Endothelial cell of umbilical vein (primary cell): ENCODE measurements at regions of chr6 and their contacts with region 1.

Region 1: DNA sequence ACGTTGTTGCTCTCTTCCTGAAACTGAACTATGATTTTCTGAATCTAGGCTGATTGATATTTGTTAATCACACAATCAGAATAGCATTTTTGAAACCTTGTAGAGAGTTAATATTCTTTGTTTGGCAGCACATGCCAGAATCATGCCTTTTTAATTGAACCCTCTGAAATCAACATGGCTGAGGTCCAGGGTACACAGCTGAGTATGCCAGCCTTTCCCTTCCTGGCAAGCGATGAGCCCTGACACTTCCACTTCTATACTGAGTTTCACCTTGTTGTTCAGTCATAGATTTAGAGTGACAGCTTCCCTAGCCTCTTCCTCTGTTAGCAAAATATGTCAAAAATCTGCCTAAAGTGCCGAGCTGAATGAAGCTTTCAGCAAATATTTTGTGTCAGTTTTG is 6.8 kb downstream of the HDDC2 start:
- DNase-seq: peak; percentile 30
- H3K4me3 ChIP-seq: no peak overlapping the region
- H3K27ac ChIP-seq: no peak overlapping the region
- H3K4me1 ChIP-seq: peaks cover 3% of the 10 kb centered on the region
- H3K27me3 ChIP-seq: no peaks in the 10 kb centered on the region
- CTCF ChIP-seq: no peak
- POLR2A ChIP-seq: no peak

Region 2: GRCh38 chr6:125213939-125214338 is 81.0 kb before region 1 on chr6:
- CTCF ChIA-PET with region 1: no interaction called
- POLR2A ChIA-PET with region 1: no interaction called
- dilution Hi-C with region 1: no loop called
- intact Hi-C with region 1: loop called (anchors 5 kb)
- DNase-seq: no peak
- H3K4me3 ChIP-seq: no peak overlapping the region
- H3K27ac ChIP-seq: no peak overlapping the region
- H3K4me1 ChIP-seq: no peaks in the 10 kb centered on the region
- H3K27me3 ChIP-seq: no peaks in the 10 kb centered on the region
- CTCF ChIP-seq: no peak
- POLR2A ChIP-seq: no peak

Region 3: DNA sequence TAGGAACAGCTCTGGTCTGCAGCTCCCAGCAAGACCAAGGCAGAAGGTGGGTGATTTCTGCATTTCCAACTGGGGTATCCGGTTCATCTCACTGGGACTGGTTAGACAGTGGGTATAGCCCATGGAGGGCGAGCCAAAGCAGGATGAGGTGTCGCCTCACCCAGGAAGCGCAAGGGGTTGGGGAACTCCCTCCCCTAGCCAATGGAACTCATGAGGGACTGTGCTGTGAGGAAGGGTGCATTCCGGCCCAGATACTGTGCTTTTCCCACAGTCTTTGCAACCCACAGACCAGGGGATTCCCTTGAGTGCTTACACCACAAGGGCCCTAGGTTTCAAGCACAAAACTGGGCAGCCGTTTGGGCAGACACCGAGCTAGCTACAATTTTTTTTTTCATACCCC is 15.0 kb before region 1 on chr6:
- CTCF ChIA-PET with region 1: no interaction called
- POLR2A ChIA-PET with region 1: no interaction called
- dilution Hi-C with region 1: no loop called
- intact Hi-C with region 1: no loop called
- DNase-seq: no peak
- H3K4me3 ChIP-seq: no peak overlapping the region
- H3K27ac ChIP-seq: no peak overlapping the region
- H3K4me1 ChIP-seq: no peaks in the 10 kb centered on the region
- H3K27me3 ChIP-seq: no peaks in the 10 kb centered on the region
- CTCF ChIP-seq: no peak
- POLR2A ChIP-seq: no peak